PC-9 (cell line): ENCODE measurements at regions of chr2 and their contacts with region 1.

Region 1: DNA sequence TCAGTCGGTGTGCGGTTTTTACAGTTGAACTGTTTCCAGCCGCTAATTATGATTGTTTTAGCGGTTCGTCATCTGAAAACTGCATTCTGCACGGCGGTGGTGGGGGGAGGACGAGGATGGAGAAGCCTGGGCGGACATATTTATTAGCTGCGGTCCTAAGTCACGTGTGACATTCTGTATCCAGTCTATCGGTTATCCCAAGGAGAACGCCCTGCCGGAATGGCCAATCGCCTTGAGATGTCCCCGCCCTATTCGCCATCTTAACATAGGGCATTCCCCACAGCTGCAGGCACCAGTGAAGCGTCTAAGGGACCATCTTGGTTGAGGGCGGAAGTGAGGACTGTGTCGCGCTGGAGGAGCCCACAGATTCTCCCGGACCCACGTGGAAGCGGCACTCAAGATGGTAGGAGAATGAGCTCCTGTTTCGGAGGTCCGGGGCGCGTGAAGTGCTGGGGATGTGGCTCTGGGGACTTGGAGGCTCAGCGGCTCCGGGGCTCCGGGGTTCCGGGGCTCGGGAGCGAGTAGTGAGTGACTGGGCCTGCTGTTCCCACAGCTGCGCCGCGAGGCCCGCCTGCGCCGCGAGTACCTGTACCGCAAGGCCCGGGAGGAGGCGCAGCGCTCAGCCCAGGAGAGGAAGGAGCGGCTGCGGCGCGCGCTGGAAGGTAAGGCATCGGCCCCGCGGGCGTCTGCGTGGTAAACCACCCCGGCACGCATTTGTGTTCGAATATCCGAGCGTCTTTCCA is at the start of gene IMP4:
- DNase-seq: peak; percentile 93 to 98
- H3K4me3 ChIP-seq: peak within 1 kb of the TSS; percentile 90
- H3K27ac ChIP-seq: peak within 1 kb of the TSS; percentile 52
- H3K4me1 ChIP-seq: peaks cover 18% of the 10 kb centered on the region
- H3K27me3 ChIP-seq: no peaks in the 10 kb centered on the region
- CTCF ChIP-seq: no peak; the same call in 1 of the 2 replicates
- total RNA-seq, gene IMP4: 76.8 and 82.6 TPM in 2 replicates

Region 2: DNA sequence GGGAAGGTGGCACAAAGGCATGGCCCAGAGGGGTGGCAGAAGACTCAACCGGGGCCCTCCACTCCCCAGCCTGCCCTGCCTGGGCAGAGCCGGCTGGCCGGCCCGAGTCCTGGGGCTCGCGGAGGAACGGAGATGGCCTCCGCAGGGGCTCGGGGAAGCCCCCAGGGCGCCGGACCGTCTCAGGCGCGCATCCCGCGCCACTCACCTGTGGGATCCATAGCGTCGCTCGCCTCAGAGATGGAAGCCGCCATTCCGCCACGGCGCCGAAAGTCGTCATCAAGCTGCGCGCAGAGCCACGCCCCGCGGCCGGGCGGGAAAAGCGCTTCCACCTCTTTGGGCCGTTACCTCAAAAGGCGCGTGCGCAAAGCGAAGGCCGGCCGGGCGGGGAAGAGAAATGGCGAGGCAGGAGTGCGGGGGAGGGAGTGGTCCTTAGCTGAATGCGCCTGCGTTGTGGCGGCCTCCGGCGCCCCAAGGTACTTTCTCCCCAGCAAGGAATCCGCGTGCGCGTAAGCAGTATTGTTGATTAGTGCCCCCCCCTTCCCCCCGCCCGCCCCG is 161.3 kb before region 1 on chr2 and contains the start of gene SMPD4:
- CTCF ChIA-PET with region 1: interaction called, 11 read pairs
- POLR2A ChIA-PET with region 1: interaction called, 22 read pairs
- intact Hi-C with region 1: loop called (anchors 1 kb)
- DNase-seq: peak; percentile 87 to 97
- H3K4me3 ChIP-seq: peak within 1 kb of the TSS; percentile 79
- H3K27ac ChIP-seq: peak within 1 kb of the TSS; percentile 32; the same call in 1 of the 2 replicates
- H3K4me1 ChIP-seq: 0 out of 2 replicates have a peak, but pooled peaks cover 4% of the 10 kb centered on the region
- H3K27me3 ChIP-seq: no peaks in the 10 kb centered on the region
- CTCF ChIP-seq: no peak
- total RNA-seq, gene SMPD4: 77.9 and 84.1 TPM in 2 replicates

Region 3: DNA sequence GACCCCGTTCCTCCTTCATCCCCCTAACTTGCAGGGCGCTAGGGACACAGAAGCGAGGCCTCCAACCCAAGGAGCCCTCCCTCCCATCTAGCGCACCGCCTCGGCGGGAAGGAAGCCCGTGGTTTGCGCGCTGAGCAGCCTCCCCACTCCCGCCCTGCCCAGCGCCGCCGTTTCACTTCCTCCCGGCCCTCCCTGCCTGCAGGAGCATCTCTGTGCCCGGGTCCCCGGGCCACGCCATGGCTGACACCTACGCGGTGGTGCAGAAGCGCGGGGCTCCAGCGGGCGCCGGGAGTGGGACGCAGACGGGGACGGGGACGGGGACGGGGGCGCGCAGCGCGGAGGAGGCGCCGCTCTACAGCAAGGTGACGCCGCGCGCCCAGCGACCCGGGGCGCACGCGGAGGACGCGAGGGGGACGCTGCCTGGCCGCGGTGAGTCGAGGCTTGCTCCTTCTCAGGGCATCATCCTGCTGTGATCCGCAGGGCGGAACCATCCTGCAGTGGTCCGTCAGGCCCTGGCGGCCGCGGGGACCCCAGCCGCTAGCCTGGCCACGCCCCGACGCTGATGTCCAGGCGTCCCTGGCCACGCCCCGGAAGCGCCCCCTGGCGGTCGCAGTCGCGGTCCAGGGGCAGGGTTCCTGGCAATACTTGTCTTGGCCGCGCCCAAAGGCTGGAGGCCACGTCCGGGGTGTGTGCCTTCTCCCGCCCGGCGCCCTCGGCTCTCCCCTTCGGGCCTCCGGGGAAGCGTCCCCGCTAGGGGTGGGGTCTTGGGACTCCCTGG is 29.5 kb after region 1 on chr2:
- CTCF ChIA-PET with region 1: interaction called, 3 read pairs
- POLR2A ChIA-PET with region 1: no interaction called
- intact Hi-C with region 1: loop called (anchors 1 kb)
- DNase-seq: peak; percentile 70 to 93
- H3K4me3 ChIP-seq: peak overlapping the region; percentile 94
- H3K27ac ChIP-seq: no peak overlapping the region
- H3K4me1 ChIP-seq: 0 out of 2 replicates have a peak, but pooled peaks cover 9% of the 10 kb centered on the region
- H3K27me3 ChIP-seq: no peaks in the 10 kb centered on the region
- CTCF ChIP-seq: peak; percentile 91

Region 4: GRCh38 chr2:130391058-130391871 is 48.6 kb after region 1 on chr2:
- CTCF ChIA-PET with region 1: no interaction called
- POLR2A ChIA-PET with region 1: no interaction called
- intact Hi-C with region 1: loop called (anchors 2 kb)
- DNase-seq: peak; percentile 59 to 70
- H3K4me3 ChIP-seq: peak overlapping the region; percentile 85
- H3K27ac ChIP-seq: no peak overlapping the region
- H3K4me1 ChIP-seq: peaks cover 15% of the 10 kb centered on the region; the same call in 1 of the 2 replicates
- H3K27me3 ChIP-seq: no peaks in the 10 kb centered on the region; the same call in 1 of the 2 replicates
- CTCF ChIP-seq: no peak